Mucosa of descending colon (tissue), 3 donors: ENCODE measurements at regions of chr10 and their contacts with region 1.

Region 1: GRCh38 chr10:5873515-5873995 is 16.1 kb downstream of the ANKRD16 start:
- DNase-seq: peak in 2 of 3 donors; percentile 55 to 84
- ATAC-seq: peak; percentile 96
- H3K4me3 ChIP-seq: no peak overlapping the region
- H3K4me1 ChIP-seq: no peaks in the 10 kb centered on the region
- CTCF ChIP-seq: peak; percentile 74

Region 2: GRCh38 chr10:5813287-5814109 is 60.1 kb before region 1 on chr10 and contains the start of gene GDI2:
- intact Hi-C with region 1: loop called in 1 of 2 experiments (anchors 10 kb)
- DNase-seq: peak; percentile 98
- ATAC-seq: peak; percentile 96
- H3K4me3 ChIP-seq: peak within 1 kb of the TSS; percentile 93
- H3K4me1 ChIP-seq: peaks cover 38% of the 10 kb centered on the region
- CTCF ChIP-seq: no peak
- total RNA-seq, gene GDI2: 185 to 239 (median 211) TPM